ENCODE measurements at regions of chr2 and their contacts with region 1.

Region 1: DNA sequence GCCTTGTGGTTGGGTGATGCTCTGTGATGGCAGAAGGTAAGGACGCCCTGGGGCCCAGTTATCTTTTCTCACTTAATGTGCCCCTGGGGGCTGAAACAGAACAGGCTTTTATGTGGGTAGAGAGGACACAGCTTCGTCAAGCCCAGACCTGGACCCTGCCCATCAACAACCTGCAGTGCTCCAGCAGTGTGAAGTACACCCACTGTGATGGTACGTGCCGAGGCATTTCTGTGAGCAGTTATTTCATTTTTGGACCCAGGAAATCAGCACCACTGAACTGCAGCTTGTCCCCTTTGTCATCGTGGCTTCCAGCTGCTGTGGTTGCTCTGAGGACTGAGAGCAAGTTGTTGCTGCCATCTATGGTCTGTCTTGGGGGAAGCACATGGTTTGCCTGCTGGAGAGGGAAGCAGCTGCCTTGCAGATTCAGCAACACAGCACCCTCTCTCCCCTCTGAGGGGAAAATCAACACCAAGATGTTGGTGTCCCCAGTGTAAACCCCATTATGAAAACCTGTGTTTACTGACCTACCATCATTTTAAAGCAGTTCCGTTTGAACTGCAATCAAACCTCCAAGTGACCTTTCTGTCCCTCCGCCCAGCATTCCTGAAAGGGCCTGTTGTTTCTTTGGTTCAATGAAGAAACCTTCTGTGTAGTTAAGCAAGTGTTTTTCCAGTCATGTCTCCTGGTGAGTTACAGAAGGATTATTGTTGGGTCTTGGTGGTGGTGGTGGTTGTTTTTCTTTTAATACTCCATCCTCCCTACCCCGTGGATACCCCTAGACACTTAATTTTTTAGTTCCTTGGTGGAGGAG is 158.2 kb downstream of the MGAT5 start:
- DNase-seq: peak; percentile 88
- ATAC-seq: peak; percentile 97
- H3K4me3 Mint-ChIP-seq: no peak overlapping the region
- H3K27ac Mint-ChIP-seq: peak overlapping the region; percentile 71
- H3K4me1 Mint-ChIP-seq: peaks cover 47% of the 10 kb centered on the region
- H3K27me3 Mint-ChIP-seq: no peaks in the 10 kb centered on the region

Region 2: GRCh38 chr2:134127496-134127895 is 284.5 kb before region 1 on chr2:
- CTCF ChIA-PET with region 1: interaction called, 16 read pairs
- POLR2A ChIA-PET with region 1: interaction called, 3 read pairs
- DNase-seq: peak; percentile 66
- ATAC-seq: peak; percentile 85
- H3K4me3 Mint-ChIP-seq: no peak overlapping the region
- H3K27ac Mint-ChIP-seq: no peak overlapping the region
- H3K4me1 Mint-ChIP-seq: peaks cover 62% of the 10 kb centered on the region
- H3K27me3 Mint-ChIP-seq: no peaks in the 10 kb centered on the region

Region 3: DNA sequence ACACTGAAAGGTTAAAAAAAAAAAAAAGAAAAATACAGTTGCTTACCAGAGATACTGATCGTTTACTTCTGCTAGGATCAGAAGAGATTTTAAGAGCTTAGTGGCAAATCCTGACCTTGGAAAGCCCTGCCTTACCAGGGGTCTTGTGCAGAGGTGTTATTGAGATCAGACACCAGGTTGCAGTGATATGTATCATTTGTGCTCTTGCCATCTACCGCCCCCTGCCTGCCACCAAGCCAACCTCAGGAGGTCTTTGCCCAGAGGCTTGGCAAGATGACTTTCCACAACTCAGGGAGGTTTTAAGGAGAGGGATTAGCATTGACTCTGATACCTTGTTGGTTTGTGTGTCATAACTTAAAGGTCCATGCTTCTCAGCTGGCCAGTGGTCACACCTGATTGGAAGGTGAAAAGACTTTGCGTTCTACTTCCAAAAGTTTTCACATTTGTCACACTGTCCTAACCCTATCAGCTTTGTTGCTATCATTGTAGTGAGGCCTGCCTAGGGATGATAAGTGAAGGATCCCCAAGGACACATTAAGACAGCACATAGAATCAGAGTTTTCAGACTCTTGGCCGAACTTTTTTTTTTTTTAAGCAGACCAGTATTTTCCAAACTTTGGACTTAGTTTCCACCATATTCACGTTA is 204.3 kb before region 1 on chr2:
- CTCF ChIA-PET with region 1: interaction called, 32 read pairs
- POLR2A ChIA-PET with region 1: no interaction called
- DNase-seq: peak; percentile 68
- ATAC-seq: peak; percentile 90
- H3K4me3 Mint-ChIP-seq: no peak overlapping the region
- H3K27ac Mint-ChIP-seq: no peak overlapping the region
- H3K4me1 Mint-ChIP-seq: peaks cover 10% of the 10 kb centered on the region
- H3K27me3 Mint-ChIP-seq: no peaks in the 10 kb centered on the region

Region 4: GRCh38 chr2:134232868-134233727 is 178.9 kb before region 1 on chr2:
- CTCF ChIA-PET with region 1: interaction called, 28 read pairs
- POLR2A ChIA-PET with region 1: interaction called, 3 read pairs
- DNase-seq: no peak
- ATAC-seq: peak; percentile 78
- H3K4me3 Mint-ChIP-seq: peak overlapping the region; percentile 37
- H3K27ac Mint-ChIP-seq: peak overlapping the region; percentile 84
- H3K4me1 Mint-ChIP-seq: peaks cover 69% of the 10 kb centered on the region
- H3K27me3 Mint-ChIP-seq: no peaks in the 10 kb centered on the region

Region 5: DNA sequence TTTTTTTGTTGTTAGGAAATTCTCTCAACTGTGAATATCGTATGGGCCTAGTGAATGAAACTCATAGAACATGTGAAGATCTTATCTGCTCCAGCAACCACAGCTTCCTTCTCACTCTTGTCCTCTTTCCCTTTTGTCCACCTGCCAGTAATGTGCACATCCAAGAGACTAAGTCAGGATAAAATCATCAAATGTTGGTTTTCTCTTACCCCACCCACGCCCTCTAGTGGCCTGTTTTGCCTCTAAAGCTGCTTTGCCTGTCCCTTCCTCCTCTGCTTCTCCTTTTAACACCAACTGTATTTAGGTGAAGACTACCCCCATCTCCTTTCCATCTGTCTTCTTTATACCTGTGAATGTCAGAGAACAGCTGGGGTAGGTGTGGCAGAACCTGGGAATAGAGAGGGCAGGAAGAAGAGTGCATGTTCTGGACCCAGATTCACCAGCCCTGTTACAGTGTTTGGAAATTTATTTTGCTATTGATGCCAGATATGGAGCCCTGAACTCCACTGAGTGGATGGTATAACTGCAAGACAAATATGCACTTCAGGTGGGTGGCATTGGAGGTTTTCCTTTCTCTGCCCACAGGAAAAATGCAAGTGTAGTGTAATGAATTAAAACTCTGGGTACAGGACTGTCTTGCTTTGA is 166.6 kb before region 1 on chr2:
- CTCF ChIA-PET with region 1: interaction called, 74 read pairs
- POLR2A ChIA-PET with region 1: no interaction called
- DNase-seq: peak; percentile 88
- ATAC-seq: peak; percentile 63
- H3K4me3 Mint-ChIP-seq: peak overlapping the region; percentile 5
- H3K27ac Mint-ChIP-seq: peak overlapping the region; percentile 33
- H3K4me1 Mint-ChIP-seq: peaks cover 79% of the 10 kb centered on the region
- H3K27me3 Mint-ChIP-seq: no peaks in the 10 kb centered on the region

Region 6: GRCh38 chr2:134261398-134262131 is 150.5 kb before region 1 on chr2:
- CTCF ChIA-PET with region 1: interaction called, 22 read pairs
- POLR2A ChIA-PET with region 1: no interaction called
- DNase-seq: no peak
- ATAC-seq: no peak
- H3K4me3 Mint-ChIP-seq: no peak overlapping the region
- H3K27ac Mint-ChIP-seq: peak overlapping the region; percentile 63
- H3K4me1 Mint-ChIP-seq: peaks cover 78% of the 10 kb centered on the region
- H3K27me3 Mint-ChIP-seq: no peaks in the 10 kb centered on the region

Region 7: DNA sequence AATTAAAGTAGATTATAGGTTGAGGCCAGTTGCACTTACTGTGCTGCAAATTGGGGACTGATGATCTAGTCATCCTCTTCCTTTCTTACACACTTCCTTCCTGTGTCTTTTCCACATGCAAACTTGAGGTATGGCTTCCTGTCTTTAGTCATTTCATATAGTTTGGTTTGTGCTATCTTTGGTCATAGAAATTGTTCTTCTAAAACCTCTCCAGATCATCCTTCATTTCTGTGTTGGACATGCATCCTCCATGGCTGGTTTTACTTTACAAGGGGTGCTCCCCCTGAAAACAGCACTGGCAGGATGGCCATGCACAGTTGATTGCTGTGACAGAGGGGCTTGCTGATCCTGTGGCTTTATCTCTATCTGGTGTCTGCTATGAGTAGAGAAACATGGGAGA is 121.7 kb before region 1 on chr2:
- CTCF ChIA-PET with region 1: interaction called, 17 read pairs
- POLR2A ChIA-PET with region 1: no interaction called
- DNase-seq: peak; percentile 46
- ATAC-seq: peak; percentile 68
- H3K4me3 Mint-ChIP-seq: no peak overlapping the region
- H3K27ac Mint-ChIP-seq: no peak overlapping the region
- H3K4me1 Mint-ChIP-seq: peaks cover 20% of the 10 kb centered on the region
- H3K27me3 Mint-ChIP-seq: no peaks in the 10 kb centered on the region

Region 8: DNA sequence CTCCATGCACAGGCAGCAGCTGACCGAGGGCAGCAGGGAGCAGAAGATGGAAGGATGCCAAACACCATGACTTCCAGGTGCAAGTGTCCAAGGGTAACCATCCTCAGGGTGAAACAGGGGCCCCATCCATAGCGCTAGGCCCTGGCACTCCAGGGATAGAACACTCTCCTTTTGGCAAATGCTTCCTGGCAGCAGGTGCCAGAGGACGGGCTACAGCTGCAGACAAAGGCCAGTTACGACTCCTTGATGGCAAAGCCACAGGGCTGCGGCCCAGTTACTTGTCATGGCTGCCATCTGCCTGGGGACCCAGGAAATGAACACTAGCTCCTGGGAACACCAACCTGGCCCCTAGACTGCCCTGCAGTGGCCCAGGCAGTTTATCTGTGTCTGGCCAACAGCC is 127.9 kb after region 1 on chr2:
- CTCF ChIA-PET with region 1: no interaction called
- POLR2A ChIA-PET with region 1: no interaction called
- DNase-seq: no peak
- ATAC-seq: no peak
- H3K4me3 Mint-ChIP-seq: no peak overlapping the region
- H3K27ac Mint-ChIP-seq: no peak overlapping the region
- H3K4me1 Mint-ChIP-seq: no peaks in the 10 kb centered on the region
- H3K27me3 Mint-ChIP-seq: peaks cover 2% of the 10 kb centered on the region

Region 9: GRCh38 chr2:134892282-134893070 is 480.4 kb after region 1 on chr2:
- CTCF ChIA-PET with region 1: no interaction called
- POLR2A ChIA-PET with region 1: no interaction called
- DNase-seq: no peak
- ATAC-seq: no peak
- H3K4me3 Mint-ChIP-seq: no peak overlapping the region
- H3K27ac Mint-ChIP-seq: no peak overlapping the region
- H3K4me1 Mint-ChIP-seq: no peaks in the 10 kb centered on the region
- H3K27me3 Mint-ChIP-seq: peaks cover 9% of the 10 kb centered on the region